Mucosa of descending colon (tissue), 3 donors: ENCODE measurements at regions of chr9 and their contacts with region 1.

Region 1: GRCh38 chr9:38233343-38233742 is 159.2 kb upstream of the ALDH1B1 start:
- DNase-seq: no peak
- ATAC-seq: no peak
- H3K4me3 ChIP-seq: no peak overlapping the region
- H3K4me1 ChIP-seq: no peaks in the 10 kb centered on the region
- CTCF ChIP-seq: no peak

Region 2: DNA sequence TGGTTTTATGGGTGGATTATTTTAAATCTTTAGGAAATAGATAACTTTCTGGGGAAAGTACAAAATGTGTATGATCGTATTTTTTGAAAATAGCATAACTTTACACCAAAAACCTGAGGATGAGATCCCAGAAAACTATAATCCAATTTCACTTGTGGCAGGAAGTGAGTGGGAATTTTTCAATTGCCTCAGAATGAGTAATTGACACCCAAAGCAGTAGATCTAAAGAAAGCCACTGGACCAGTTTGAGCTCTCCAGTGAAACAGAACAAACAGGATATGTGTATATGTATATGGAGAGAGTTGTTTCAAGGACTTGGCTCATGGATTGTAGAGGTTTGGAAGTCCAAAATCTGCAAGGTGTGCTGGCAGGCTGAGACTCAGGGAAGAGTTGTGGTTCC is 55.1 kb before region 1 on chr9:
- intact Hi-C with region 1: loop called in 1 of 2 experiments (anchors 10 kb)
- DNase-seq: no peak
- ATAC-seq: no peak
- H3K4me3 ChIP-seq: no peak overlapping the region
- H3K4me1 ChIP-seq: no peaks in the 10 kb centered on the region
- CTCF ChIP-seq: no peak